Activated naive CD4-positive, alpha-beta T cell treated with anti-CD3 and anti-CD28 coated beads for 36 hours (primary cell): ENCODE measurements at regions of chr18 and their contacts with region 1.

Region 1: GRCh38 chr18:61551586-61551985 is 218.4 kb downstream of the CDH20 start:
- DNase-seq: peak; percentile 32
- H3K4me3 Mint-ChIP-seq: no peak overlapping the region
- H3K27ac Mint-ChIP-seq: no peak overlapping the region
- H3K4me1 Mint-ChIP-seq: peaks cover 7% of the 10 kb centered on the region
- H3K27me3 Mint-ChIP-seq: peaks cover 6% of the 10 kb centered on the region

Region 2: DNA sequence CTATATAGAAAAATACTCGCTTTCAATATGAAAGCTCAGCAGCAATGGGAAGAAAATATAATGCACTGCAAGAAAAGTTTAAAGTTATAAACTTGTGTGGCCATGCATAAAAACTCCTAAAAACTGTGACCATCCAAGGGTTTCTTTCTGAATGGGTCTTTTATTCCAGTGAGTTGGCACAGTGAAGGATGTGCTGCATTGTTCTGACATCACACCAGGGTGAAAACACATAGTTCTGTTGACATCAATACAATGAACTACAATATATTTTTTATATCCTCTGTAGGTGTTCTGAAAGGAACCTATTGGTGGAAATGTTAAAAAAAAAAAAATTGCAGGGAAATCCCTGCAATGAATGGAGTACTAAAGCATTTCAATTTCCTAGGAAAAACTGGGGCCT is 138.2 kb before region 1 on chr18:
- CTCF ChIA-PET with region 1: no interaction called
- intact Hi-C with region 1: no loop called
- DNase-seq: no peak
- H3K4me3 Mint-ChIP-seq: no peak overlapping the region
- H3K27ac Mint-ChIP-seq: no peak overlapping the region
- H3K4me1 Mint-ChIP-seq: no peaks in the 10 kb centered on the region
- H3K27me3 Mint-ChIP-seq: no peaks in the 10 kb centered on the region

Region 3: GRCh38 chr18:61570070-61570469 is 18.5 kb after region 1 on chr18:
- CTCF ChIA-PET with region 1: no interaction called
- intact Hi-C with region 1: no loop called
- DNase-seq: no peak
- H3K4me3 Mint-ChIP-seq: no peak overlapping the region
- H3K27ac Mint-ChIP-seq: no peak overlapping the region
- H3K4me1 Mint-ChIP-seq: no peaks in the 10 kb centered on the region
- H3K27me3 Mint-ChIP-seq: peaks cover 21% of the 10 kb centered on the region

Region 4: DNA sequence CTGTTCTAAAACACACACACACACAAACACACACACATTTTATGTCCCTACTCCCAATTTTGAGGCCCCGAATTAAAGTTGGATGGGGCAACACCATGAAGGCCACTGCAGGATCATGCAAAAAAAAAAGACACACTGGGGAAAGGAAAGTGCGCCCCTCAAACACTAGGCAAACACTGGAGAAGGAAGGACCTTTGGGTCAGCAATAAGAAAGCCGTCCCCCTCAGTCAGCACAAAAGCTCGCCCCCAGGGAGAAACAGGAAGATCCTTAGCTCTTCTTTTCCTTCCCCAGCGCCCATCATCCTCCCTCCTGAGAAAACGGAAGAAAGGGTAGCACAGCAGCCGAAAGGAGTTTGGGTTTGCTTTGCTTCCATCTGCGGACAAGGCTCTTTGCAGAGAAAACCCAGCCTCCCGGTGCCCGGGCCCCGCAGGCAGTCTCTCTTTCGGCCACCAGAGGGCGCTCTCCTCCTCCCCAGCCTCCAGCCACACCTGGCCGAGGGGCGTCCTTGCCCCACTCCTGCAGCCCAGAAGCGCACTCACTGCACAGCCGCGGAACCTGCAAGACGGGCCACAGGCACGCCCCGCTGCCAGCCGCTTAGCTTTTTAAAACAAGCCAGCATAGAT is 30.1 kb after region 1 on chr18:
- CTCF ChIA-PET with region 1: interaction called, 4 read pairs
- intact Hi-C with region 1: loop called (anchors 2 kb)
- DNase-seq: peak; percentile 71
- H3K4me3 Mint-ChIP-seq: no peak overlapping the region
- H3K27ac Mint-ChIP-seq: no peak overlapping the region
- H3K4me1 Mint-ChIP-seq: peaks cover 8% of the 10 kb centered on the region
- H3K27me3 Mint-ChIP-seq: peaks cover 38% of the 10 kb centered on the region

Region 5: GRCh38 chr18:63476666-63477065 is 1925.1 kb after region 1 on chr18 and contains the start of gene SERPINB5:
- CTCF ChIA-PET with region 1: no interaction called
- intact Hi-C with region 1: no loop called
- DNase-seq: no peak
- H3K4me3 Mint-ChIP-seq: no peak within 1 kb of the TSS
- H3K27ac Mint-ChIP-seq: no peak within 1 kb of the TSS
- H3K4me1 Mint-ChIP-seq: no peaks in the 10 kb centered on the region
- H3K27me3 Mint-ChIP-seq: no peaks in the 10 kb centered on the region
- total RNA-seq, gene SERPINB5: not detected